ENCODE measurements at regions of chr6 and their contacts with region 1.

Region 1: GRCh38 chr6:99514089-99514488 is 1.1 kb downstream of the USP45 start:
- DNase-seq: no peak
- H3K4me3 ChIP-seq: peak overlapping the region; percentile 82
- H3K27ac ChIP-seq: no peak overlapping the region
- H3K4me1 ChIP-seq: peaks cover 23% of the 10 kb centered on the region
- CTCF ChIP-seq: no peak

Region 2: DNA sequence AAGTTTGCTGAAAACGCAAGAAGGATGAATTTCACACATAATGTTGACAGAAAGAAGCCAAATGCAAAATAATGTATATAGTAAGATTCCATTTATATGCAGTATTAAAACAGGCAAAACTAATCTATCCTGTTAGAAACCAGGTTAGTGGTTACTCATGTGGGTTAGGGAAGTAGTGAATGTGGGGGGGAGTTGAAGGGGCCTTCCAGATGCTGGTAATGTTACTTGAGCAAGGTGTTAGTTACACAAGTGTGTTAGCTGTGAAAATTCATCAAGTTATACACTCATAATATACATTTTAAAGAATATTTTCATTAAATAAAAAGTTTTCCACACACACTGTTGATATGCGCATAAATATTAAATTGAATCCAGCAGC is 28.7 kb before region 1 on chr6:
- CTCF ChIA-PET with region 1: interaction called, 4 read pairs
- POLR2A ChIA-PET with region 1: interaction called, 11 read pairs
- intact Hi-C with region 1: loop called (anchors 1 kb)
- DNase-seq: no peak
- H3K4me3 ChIP-seq: no peak overlapping the region
- H3K27ac ChIP-seq: peak overlapping the region; percentile 36
- H3K4me1 ChIP-seq: peaks cover 17% of the 10 kb centered on the region
- CTCF ChIP-seq: no peak

Region 3: GRCh38 chr6:99495466-99495865 is 18.6 kb before region 1 on chr6:
- CTCF ChIA-PET with region 1: no interaction called
- POLR2A ChIA-PET with region 1: interaction called, 22 read pairs
- intact Hi-C with region 1: no loop called
- DNase-seq: no peak
- H3K4me3 ChIP-seq: no peak overlapping the region
- H3K27ac ChIP-seq: no peak overlapping the region
- H3K4me1 ChIP-seq: peaks cover 12% of the 10 kb centered on the region
- CTCF ChIP-seq: no peak

Region 4: GRCh38 chr6:100176311-100176950 is 662.3 kb after region 1 on chr6:
- CTCF ChIA-PET with region 1: no interaction called
- POLR2A ChIA-PET with region 1: no interaction called
- intact Hi-C with region 1: no loop called
- DNase-seq: peak; percentile 2
- H3K4me3 ChIP-seq: no peak overlapping the region
- H3K27ac ChIP-seq: no peak overlapping the region
- H3K4me1 ChIP-seq: no peaks in the 10 kb centered on the region
- CTCF ChIP-seq: peak; percentile 55; the same call in 1 of the 2 replicates

Measured in OCI-LY7 (cell line).